Activated B cell treated with CpG ODN at 0.5 μM for 24 hours (primary cell): ENCODE measurements at regions of chr3 and their contacts with region 1.

Region 1: GRCh38 chr3:129576514-129577352 is 29.7 kb downstream of the PLXND1 start:
- DNase-seq: peak; percentile 53
- ATAC-seq: peak; percentile 63
- H3K4me3 Mint-ChIP-seq: peak overlapping the region; percentile 48
- H3K27ac Mint-ChIP-seq: peak overlapping the region; percentile 86
- H3K4me1 Mint-ChIP-seq: peaks cover 61% of the 10 kb centered on the region
- H3K27me3 Mint-ChIP-seq: no peaks in the 10 kb centered on the region
- CTCF ChIP-seq: no peak

Region 2: DNA sequence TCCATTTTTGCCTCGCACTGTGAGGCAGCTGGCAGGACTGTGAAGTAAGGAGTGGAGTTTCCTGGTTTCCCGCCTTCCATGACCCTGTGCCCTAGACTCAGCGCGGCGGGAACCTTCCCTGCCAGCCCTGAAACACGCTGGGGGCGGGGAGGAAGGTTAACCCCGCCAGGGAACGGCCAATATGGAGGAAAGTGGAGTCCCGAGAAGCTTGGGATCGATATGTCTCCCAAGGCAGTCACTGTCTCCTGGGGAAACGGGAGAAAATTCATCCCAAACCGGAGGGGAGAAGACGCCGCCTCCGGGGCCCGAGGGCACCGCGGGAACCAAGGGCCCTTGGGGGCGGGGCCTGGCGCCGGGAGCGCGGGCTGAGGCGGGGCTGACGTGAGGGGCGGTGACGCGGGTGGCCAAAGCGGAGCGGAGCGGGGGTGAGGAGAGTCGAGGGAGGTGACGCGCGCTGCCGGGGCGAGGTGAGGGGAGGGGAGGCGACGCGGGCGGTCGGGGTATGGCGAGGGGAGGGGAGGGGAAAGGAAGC is 298.2 kb before region 1 on chr3 and contains the start of gene HMCES:
- CTCF ChIA-PET with region 1: no interaction called
- POLR2A ChIA-PET with region 1: no interaction called
- intact Hi-C with region 1: loop called (anchors 5 kb)
- DNase-seq: peak; percentile 91
- ATAC-seq: peak; percentile 62
- H3K4me3 Mint-ChIP-seq: peak within 1 kb of the TSS; percentile 91
- H3K27ac Mint-ChIP-seq: peak within 1 kb of the TSS; percentile 86
- H3K4me1 Mint-ChIP-seq: peaks cover 80% of the 10 kb centered on the region
- H3K27me3 Mint-ChIP-seq: no peaks in the 10 kb centered on the region
- CTCF ChIP-seq: no peak
- total RNA-seq, gene HMCES: 31.7 and 37.2 TPM in 2 replicates

Region 3: GRCh38 chr3:129526121-129526900 is 50.4 kb before region 1 on chr3:
- CTCF ChIA-PET with region 1: interaction called, 5 read pairs
- POLR2A ChIA-PET with region 1: interaction called, 14 read pairs
- intact Hi-C with region 1: loop called (anchors 1 kb)
- DNase-seq: peak; percentile 36
- ATAC-seq: peak; percentile 100
- H3K4me3 Mint-ChIP-seq: no peak overlapping the region
- H3K27ac Mint-ChIP-seq: peak overlapping the region; percentile 88
- H3K4me1 Mint-ChIP-seq: peaks cover 21% of the 10 kb centered on the region
- H3K27me3 Mint-ChIP-seq: no peaks in the 10 kb centered on the region
- CTCF ChIP-seq: no peak

Region 4: GRCh38 chr3:129606636-129607390 is 30.1 kb after region 1 on chr3 and contains the start of gene PLXND1:
- CTCF ChIA-PET with region 1: interaction called, 3 read pairs
- POLR2A ChIA-PET with region 1: interaction called, 6 read pairs
- intact Hi-C with region 1: loop called (anchors 1 kb)
- DNase-seq: peak; percentile 34
- ATAC-seq: peak; percentile 75
- H3K4me3 Mint-ChIP-seq: peak within 1 kb of the TSS; percentile 86
- H3K27ac Mint-ChIP-seq: no peak within 1 kb of the TSS
- H3K4me1 Mint-ChIP-seq: peaks cover 10% of the 10 kb centered on the region
- H3K27me3 Mint-ChIP-seq: peaks cover 24% of the 10 kb centered on the region
- CTCF ChIP-seq: no peak
- total RNA-seq, gene PLXND1: 3.1 and 3.7 TPM in 2 replicates

Region 5: GRCh38 chr3:129645290-129645689 is 68.6 kb after region 1 on chr3:
- CTCF ChIA-PET with region 1: no interaction called
- POLR2A ChIA-PET with region 1: no interaction called
- intact Hi-C with region 1: no loop called
- DNase-seq: no peak
- ATAC-seq: no peak
- H3K4me3 Mint-ChIP-seq: no peak overlapping the region
- H3K27ac Mint-ChIP-seq: no peak overlapping the region
- H3K4me1 Mint-ChIP-seq: peaks cover 2% of the 10 kb centered on the region
- H3K27me3 Mint-ChIP-seq: no peaks in the 10 kb centered on the region
- CTCF ChIP-seq: no peak